ENCODE measurements at regions of chr13 and their contacts with region 1.

Region 1: DNA sequence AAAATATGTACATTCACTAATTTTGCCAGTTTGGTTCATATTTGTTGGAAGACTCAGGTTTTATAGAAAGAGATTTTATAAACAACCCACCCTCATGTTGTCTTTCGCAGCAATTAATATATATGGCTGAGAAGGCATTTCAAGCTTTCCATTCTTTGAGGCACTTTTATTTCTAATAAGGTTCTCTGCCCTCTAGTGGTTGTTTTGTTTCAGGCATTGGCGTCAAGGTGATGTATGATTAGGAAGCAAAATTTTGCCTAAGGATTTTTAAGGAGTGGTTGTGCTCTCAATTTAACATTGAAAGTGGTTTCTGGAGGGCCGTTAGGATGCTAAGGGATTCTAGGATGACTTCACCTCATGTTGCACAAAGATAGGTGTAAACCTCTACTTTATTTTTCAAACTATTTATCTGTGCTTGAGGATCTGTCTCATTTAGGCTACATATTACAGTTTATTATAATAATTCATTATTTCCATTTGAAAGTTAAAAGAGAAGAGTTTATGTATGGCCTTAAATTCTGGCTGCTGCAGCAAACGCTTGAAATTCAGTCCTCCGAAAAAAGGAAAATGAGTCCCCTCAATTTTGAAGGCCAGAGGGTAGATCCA is 35.9 kb downstream of the OXGR1 start:
- DNase-seq: no peak
- H3K4me3 ChIP-seq: no peak overlapping the region
- H3K27ac ChIP-seq: no peak overlapping the region
- H3K27me3 ChIP-seq: no peaks in the 10 kb centered on the region
- CTCF ChIP-seq: peak; percentile 86

Region 2: DNA sequence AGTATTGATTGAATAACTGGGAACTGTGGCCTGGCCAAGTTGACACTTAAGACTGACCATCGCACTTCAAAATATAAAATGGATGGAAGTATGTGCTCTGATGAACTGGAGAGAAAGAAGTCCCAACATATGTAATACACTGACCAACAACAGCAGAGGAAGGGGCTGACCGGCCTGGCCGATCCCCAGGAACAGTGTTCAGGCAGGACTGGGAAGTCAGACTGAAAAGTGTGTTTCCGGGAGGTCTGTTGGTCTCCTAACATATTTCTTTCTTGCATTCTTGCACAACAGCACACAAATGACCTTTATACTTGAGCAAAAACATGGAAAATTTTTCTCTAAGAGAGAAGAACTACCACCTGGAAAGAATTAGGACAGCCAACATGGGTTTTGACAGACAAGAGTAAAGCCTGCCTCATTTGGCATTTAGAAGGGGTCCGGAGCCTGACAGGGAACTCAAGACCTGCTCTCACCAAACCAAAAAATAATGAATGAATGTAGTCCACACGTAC is 261.9 kb before region 1 on chr13:
- CTCF ChIA-PET with region 1: no interaction called
- POLR2A ChIA-PET with region 1: no interaction called
- DNase-seq: no peak
- H3K4me3 ChIP-seq: no peak overlapping the region
- H3K27ac ChIP-seq: no peak overlapping the region
- H3K27me3 ChIP-seq: no peaks in the 10 kb centered on the region
- CTCF ChIP-seq: no peak

Region 3: DNA sequence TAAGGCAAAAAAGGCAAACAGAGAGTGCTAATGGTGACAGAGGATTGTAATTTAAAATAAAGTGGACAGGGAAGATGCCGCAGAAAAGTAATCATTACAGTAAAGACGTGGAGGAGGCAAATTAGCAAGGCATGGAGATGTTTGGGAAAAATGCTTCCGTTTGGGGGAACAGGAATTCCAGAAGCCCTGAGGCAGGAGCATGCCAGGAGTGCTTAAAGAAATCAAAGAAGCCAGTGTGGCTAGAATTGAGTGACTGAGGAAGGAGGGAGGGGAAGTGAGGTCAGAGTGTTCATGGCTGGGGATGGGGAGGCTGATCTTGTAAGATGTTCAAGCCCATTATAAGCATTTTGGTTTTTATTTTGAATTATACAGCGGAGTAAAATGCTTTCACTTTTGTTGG is 65.5 kb before region 1 on chr13:
- CTCF ChIA-PET with region 1: no interaction called
- POLR2A ChIA-PET with region 1: no interaction called
- DNase-seq: no peak
- H3K4me3 ChIP-seq: no peak overlapping the region
- H3K27ac ChIP-seq: no peak overlapping the region
- H3K27me3 ChIP-seq: no peaks in the 10 kb centered on the region
- CTCF ChIP-seq: no peak

Region 4: DNA sequence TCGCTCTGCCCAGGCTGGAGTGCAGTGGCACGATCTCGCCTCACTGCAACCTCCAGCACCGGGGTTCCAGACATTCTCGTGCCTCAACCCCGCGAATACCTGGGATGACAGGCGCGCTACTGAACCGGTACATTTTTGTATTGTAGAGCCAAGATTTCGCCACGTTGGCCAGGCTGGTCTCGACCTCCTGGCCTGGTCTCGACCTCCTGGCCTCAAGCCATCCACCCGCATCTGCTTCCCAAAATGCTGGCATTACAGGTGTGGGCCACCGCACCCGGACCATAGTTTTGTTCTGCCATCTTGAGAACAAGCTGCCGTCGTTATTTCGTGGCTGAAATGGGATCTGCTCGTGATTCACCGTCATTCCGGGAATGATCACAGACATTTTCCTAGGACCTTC is 10.9 kb before region 1 on chr13:
- CTCF ChIA-PET with region 1: interaction called, 10 read pairs
- POLR2A ChIA-PET with region 1: no interaction called
- DNase-seq: no peak
- H3K4me3 ChIP-seq: no peak overlapping the region
- H3K27ac ChIP-seq: no peak overlapping the region
- H3K27me3 ChIP-seq: no peaks in the 10 kb centered on the region
- CTCF ChIP-seq: no peak